ENCODE measurements at regions of chr16 and their contacts with region 1.

Region 1: GRCh38 chr16:28317040-28317880 is 24.9 kb downstream of the SBK1 start:
- DNase-seq: peak; percentile 82
- H3K4me3 Mint-ChIP-seq: no peak overlapping the region
- H3K27ac Mint-ChIP-seq: peak overlapping the region; percentile 38
- H3K4me1 Mint-ChIP-seq: peaks cover 19% of the 10 kb centered on the region
- H3K27me3 Mint-ChIP-seq: no peaks in the 10 kb centered on the region

Region 2: GRCh38 chr16:28277537-28278388 is 39.5 kb before region 1 on chr16:
- CTCF ChIA-PET with region 1: interaction called, 251 read pairs
- POLR2A ChIA-PET with region 1: no interaction called
- intact Hi-C with region 1: loop called (anchors 1 kb)
- DNase-seq: peak; percentile 89
- H3K4me3 Mint-ChIP-seq: peak overlapping the region; percentile 57
- H3K27ac Mint-ChIP-seq: no peak overlapping the region
- H3K4me1 Mint-ChIP-seq: peaks cover 25% of the 10 kb centered on the region
- H3K27me3 Mint-ChIP-seq: peaks cover 6% of the 10 kb centered on the region

Region 3: DNA sequence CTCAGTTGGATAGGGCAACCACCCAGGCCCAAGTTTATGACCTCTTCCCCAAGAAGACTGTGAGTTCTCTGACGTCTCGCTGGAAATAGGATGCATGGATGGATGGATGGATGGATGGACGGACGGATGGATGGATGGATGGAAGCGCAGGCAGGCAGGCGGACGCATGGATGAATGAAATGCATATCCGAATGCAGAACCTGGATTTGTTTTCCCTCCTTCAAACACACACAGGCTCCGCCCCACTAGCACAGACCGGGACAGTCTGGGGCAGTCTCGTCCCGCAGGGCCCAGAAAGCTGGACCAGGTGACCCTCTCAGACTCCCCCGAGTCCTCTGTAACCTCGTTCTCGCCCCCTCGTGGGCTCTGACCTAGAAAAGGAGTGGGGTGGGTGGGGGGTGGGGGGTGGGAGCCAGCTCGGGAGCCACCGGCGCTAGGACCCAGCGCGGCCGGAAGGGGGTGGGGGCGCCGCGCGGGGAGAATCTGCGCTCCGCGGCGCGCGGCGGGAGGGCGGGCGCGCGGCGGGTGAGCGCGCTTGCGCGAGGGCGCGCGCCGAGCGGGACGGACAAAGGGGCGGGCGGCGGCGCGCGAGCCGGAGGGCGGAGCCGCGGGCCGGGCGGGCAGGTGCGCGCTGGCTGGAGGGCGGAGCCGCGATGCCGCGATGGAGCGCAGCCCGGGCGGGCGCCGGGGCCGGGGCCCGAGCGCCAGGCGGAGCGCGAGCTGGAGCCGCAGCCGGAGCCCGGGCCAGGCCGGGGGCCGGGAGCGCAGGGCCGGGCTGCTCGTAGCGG is 25.2 kb before region 1 on chr16 and contains the start of gene SBK1:
- CTCF ChIA-PET with region 1: interaction called, 46 read pairs
- POLR2A ChIA-PET with region 1: no interaction called
- intact Hi-C with region 1: no loop called
- DNase-seq: peak; percentile 85
- H3K4me3 Mint-ChIP-seq: peak within 1 kb of the TSS; percentile 82
- H3K27ac Mint-ChIP-seq: peak within 1 kb of the TSS; percentile 82
- H3K4me1 Mint-ChIP-seq: peaks cover 44% of the 10 kb centered on the region
- H3K27me3 Mint-ChIP-seq: no peaks in the 10 kb centered on the region
- total RNA-seq, gene SBK1: 2.9 to 3.8 TPM

Region 4: GRCh38 chr16:28297784-28298510 is 19.3 kb before region 1 on chr16:
- CTCF ChIA-PET with region 1: interaction called, 46 read pairs
- POLR2A ChIA-PET with region 1: no interaction called
- intact Hi-C with region 1: no loop called
- DNase-seq: no peak
- H3K4me3 Mint-ChIP-seq: no peak overlapping the region
- H3K27ac Mint-ChIP-seq: peak overlapping the region; percentile 51
- H3K4me1 Mint-ChIP-seq: peaks cover 46% of the 10 kb centered on the region
- H3K27me3 Mint-ChIP-seq: no peaks in the 10 kb centered on the region

Region 5: DNA sequence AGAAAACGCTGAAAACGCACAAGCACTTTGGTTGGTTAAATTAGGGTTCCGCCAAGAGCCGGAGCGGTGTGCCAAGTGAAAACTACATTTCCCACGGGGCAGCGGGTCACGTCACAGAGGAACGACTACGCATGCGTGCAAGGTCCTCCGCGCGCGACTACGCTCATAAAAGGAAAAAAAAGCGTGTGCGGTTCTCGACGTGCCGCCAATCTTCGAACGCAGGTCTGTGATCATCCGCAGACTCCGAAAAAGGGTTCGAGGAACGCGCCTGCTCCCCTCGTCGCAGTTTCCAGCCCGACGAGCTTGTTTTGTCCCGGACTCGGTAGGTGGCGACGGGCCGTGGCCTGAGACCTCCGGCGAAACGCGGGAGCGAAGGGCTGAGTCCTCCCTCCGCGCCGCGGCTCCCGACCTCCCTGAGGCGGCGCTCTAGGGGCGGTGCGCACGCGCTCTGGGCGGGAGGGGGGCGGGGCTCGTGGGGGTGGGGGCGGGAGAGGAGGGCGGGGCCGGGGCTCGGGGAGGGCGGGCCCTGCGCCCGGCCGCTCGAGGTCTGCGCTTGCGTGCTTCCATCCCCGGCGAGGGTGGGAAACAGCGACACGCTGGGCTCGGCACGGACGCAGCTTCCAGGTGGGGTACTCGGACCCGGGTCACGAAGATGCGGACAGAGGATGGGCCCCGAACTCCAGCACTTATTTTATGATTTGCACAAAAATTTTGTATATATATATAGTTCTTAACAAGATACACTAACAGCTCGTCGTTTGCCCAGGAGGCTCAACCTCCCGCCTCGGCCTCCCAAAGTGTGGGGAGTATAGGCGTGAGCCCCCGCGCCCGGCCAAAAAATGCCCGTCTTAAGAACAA is 236.7 kb after region 1 on chr16 and contains the start of gene SGF29:
- CTCF ChIA-PET with region 1: interaction called, 4 read pairs
- POLR2A ChIA-PET with region 1: no interaction called
- intact Hi-C with region 1: loop called (anchors 5 kb)
- DNase-seq: peak; percentile 96
- H3K4me3 Mint-ChIP-seq: peak within 1 kb of the TSS; percentile 93
- H3K27ac Mint-ChIP-seq: peak within 1 kb of the TSS; percentile 98
- H3K4me1 Mint-ChIP-seq: peaks cover 28% of the 10 kb centered on the region
- H3K27me3 Mint-ChIP-seq: peaks cover 3% of the 10 kb centered on the region
- total RNA-seq, gene SGF29: 17.8 to 18.5 TPM

Region 6: DNA sequence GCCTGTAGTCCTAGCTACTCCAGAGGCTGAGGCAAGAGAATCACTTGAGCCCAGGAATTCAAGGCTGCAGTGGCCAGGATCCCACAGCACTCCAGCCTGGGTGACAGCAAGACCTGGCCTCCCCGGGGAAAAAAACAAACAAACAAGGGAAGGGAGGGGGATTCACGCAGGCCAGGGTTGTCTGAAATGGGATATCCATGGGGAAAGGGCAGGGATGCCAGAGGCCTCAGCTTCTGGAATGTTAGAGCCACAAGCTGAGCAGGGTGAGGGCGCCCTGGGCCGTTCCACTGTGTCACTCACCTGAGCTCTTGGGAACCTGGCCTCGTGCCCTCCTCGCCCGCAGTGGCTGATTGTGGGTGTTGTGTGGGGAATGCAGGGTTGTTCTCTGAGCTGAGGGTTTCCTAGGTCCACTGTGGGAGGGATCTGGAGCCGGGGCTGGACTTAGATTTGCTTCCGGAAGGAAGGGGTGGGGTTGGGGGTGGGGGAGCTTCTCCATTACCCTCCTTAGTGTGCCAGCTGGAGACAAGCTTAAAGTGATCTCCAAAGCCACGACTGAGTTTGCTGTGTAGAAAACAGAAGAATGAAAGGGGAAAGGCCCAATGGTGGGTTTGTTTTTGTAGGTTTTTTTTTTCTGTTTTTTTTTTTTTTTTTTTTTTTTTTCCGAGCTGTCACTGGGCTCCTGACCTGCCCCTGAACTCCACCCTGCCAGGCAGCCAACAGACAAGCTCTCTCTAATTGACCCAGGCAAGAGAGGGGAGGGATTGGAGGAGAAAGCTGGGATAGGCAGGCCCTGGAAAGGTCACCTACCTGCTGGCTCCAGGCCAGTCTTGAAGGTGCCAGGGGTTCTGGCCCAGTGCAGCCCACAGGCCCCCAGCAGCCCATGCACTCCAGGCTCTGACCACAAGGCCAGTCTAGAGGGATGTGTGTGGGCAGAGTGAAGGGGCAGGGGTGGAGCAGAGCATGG is 292.7 kb after region 1 on chr16 and contains the start of gene SULT1A1:
- CTCF ChIA-PET with region 1: no interaction called
- POLR2A ChIA-PET with region 1: no interaction called
- intact Hi-C with region 1: loop called (anchors 10 kb)
- DNase-seq: no peak
- H3K4me3 Mint-ChIP-seq: no peak within 1 kb of the TSS
- H3K27ac Mint-ChIP-seq: no peak within 1 kb of the TSS
- H3K4me1 Mint-ChIP-seq: peaks cover 4% of the 10 kb centered on the region
- H3K27me3 Mint-ChIP-seq: no peaks in the 10 kb centered on the region
- total RNA-seq, gene SULT1A1: 8.7 to 9.0 TPM

Measured in activated CD4-positive, alpha-beta memory T cell treated with anti-CD3 and anti-CD28 coated beads for 36 hours (primary cell).